ENCODE measurements at regions of chr12 and their contacts with region 1.

Region 1: GRCh38 chr12:56763753-56764657 is 881 bp downstream of the HSD17B6 start:
- DNase-seq: no peak

Region 2: GRCh38 chr12:56957229-56957939 is 193.4 kb after region 1 on chr12 and contains the start of gene RDH16:
- intact Hi-C with region 1: no loop called
- DNase-seq: no peak
- total RNA-seq, gene RDH16: 0.22 TPM

Region 3: DNA sequence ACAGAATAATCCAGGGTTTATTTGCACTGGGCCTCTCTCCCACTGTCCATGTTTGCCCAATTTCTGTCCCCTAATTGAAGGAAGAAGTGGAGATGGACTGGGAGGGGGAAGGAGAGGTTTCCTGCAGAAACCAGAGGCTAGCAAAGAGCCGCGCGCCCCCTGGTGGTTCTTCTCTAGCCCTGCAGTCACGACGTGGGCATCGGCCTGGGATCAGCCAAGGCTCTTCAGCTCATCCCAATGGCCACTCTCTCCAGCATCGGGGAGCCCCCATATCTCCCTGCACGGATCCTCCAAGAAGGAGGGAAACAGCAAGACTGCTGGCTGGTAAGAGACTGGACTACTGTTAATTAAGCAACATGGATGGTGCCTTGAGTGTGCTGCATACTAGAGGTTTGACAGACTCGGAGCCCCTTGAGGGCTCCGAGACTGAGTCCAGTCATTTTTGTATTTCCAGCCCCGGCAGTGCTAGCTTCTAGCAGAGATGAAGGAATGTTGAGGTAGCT is 223.6 kb after region 1 on chr12:
- intact Hi-C with region 1: loop called (anchors 2 kb)
- DNase-seq: peak; percentile 88

Region 4: GRCh38 chr12:57005980-57006808 is 242.2 kb after region 1 on chr12 and contains the start of gene ZBTB39:
- intact Hi-C with region 1: loop called (anchors 5 kb)
- DNase-seq: no peak
- total RNA-seq, gene ZBTB39: 3.5 TPM

Region 5: GRCh38 chr12:57063991-57064685 is 300.1 kb after region 1 on chr12:
- intact Hi-C with region 1: loop called (anchors 5 kb)
- DNase-seq: no peak

Measured in cardiac septum (tissue), 1 donor.